GM13977 (cell line): ENCODE measurements at regions of chr18 and their contacts with region 1.

Region 1: GRCh38 chr18:57434536-57435494 is at the start of gene ONECUT2:
- DNase-seq: peak; percentile 93
- CTCF ChIP-seq: no peak

Region 2: GRCh38 chr18:56869189-56869777 is 565.5 kb before region 1 on chr18:
- in situ Hi-C with region 1: loop called (anchors 25 kb)
- DNase-seq: peak; percentile 16
- CTCF ChIP-seq: peak; percentile 78

Region 3: DNA sequence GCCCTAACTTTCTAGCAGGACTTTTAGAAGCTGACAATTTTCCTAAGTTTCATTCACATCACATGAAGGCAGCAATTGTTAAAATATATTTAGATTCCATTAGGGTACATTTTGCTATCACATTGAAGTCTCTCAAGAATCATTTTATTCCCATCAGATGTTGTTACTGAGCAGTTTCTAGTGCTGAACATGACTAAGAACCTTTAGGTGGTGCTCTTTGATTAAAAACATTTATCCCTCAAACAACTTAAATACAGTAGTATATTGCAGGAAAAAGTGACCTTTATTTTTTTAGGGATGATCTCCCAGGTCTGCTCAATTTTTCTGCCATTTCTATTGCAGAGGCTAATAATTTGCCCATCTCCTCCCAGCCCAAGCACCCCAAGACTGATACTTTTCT is 209.7 kb after region 1 on chr18:
- in situ Hi-C with region 1: no loop called
- DNase-seq: no peak
- CTCF ChIP-seq: peak; percentile 11